ENCODE measurements at regions of chr15 and their contacts with region 1.

Region 1: GRCh38 chr15:71443538-71443937 is 328.3 kb downstream of the THSD4 start:
- DNase-seq: peak; percentile 55
- H3K4me3 ChIP-seq: no peak overlapping the region
- H3K27ac ChIP-seq: no peak overlapping the region
- H3K4me1 ChIP-seq: no peaks in the 10 kb centered on the region
- H3K27me3 ChIP-seq: no peaks in the 10 kb centered on the region
- CTCF ChIP-seq: peak; percentile 87

Region 2: DNA sequence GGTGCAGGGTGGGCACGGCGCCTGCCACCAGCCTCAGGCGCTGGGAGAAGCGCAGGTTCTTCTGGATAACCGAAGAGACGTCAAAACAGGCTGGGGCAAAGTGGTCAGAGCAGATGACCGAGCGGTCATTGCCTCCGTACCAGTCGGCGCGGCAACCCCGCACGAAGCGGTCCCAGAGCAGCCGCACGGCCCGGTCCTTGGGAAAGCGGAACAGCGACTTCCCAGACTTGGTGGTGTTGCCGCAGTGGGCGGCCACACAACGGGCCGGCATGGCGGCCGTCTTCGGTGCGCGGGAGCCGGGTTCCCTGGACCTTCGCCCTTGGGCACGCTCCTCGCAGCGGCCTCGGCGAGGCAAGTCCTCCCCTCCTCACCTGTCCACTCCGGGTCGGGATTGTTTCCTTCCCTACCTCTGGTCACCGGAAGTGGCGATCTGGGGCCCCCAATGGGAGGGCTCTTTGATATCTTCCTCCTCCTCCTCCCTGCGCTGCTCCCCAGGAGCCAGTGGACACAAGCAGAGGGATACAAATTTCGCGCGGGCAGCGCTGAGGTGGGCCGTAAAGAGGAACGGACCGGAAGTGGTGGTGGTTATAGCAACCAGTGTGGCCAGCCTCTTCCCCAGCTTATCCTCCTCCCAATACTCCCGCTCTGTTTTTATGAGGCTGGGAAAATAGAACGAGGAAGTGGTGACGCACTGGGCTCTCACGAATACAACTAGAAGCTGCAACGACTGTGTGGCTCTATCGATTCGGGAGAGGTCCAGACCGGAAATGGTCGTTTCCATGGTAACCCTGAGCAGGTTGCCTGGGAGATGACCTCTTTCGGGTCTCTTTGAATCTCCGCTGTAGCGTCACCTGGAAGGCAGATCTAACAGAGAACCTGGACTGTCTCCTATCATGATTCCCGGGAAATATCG is 551.3 kb before region 1 on chr15 and contains the starts of genes LRRC49 and THAP10:
- CTCF ChIA-PET with region 1: interaction called, 3 read pairs
- POLR2A ChIA-PET with region 1: no interaction called
- intact Hi-C with region 1: loop called (anchors 5 kb)
- DNase-seq: peak; percentile 96
- H3K4me3 ChIP-seq: peak within 1 kb of the TSS; percentile 84
- H3K27ac ChIP-seq: peak within 1 kb of the TSS; percentile 73
- H3K4me1 ChIP-seq: peaks cover 10% of the 10 kb centered on the region
- H3K27me3 ChIP-seq: no peaks in the 10 kb centered on the region
- CTCF ChIP-seq: no peak
- total RNA-seq, gene LRRC49: 9.2 and 10.9 TPM in 2 replicates
- total RNA-seq, gene THAP10: 6.2 and 6.6 TPM in 2 replicates

Region 3: DNA sequence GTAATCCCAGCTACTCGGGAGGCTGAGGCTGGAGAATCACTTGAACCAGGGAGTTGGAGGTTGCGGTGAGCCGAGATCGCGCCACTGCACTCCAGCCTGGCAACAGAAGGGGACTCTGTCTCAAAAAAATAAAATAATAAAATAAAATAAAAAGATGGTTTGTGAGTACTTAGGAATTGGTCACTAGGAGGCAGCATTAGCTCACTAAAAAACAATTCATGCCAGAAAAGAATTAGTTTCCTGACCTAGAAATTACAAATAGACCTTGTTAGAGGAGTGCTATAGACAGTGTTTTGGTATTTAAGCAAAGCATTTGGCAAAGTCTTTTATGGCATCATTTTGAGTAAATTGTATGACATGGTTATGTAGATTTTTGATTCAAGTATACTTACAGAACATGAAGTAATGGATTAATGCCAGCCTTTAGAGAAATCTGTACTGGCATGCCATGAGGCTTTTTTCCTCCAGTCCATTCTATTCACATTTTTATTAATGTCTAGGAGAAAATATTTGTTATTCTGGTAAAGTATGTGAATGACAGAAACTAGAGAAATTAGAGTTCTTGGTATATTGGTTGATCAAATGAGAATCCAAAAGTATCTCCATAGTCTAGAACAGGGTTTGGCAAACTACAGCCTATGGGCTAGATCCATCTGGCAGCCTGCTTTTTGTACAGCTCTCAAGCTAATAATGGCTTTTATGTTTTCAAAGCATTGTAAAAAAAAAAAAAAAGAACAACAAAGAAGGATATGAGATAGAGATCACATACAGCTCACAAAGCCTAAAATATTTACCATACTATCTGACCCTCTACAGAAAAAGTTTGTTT is 469.3 kb before region 1 on chr15:
- CTCF ChIA-PET with region 1: no interaction called
- POLR2A ChIA-PET with region 1: no interaction called
- intact Hi-C with region 1: loop called (anchors 5 kb)
- DNase-seq: peak; percentile 48
- H3K4me3 ChIP-seq: no peak overlapping the region
- H3K27ac ChIP-seq: no peak overlapping the region
- H3K4me1 ChIP-seq: no peaks in the 10 kb centered on the region
- H3K27me3 ChIP-seq: no peaks in the 10 kb centered on the region
- CTCF ChIP-seq: peak; percentile 48; the same call in 1 of the 2 replicates

Region 4: GRCh38 chr15:71011503-71012155 is 431.9 kb before region 1 on chr15:
- CTCF ChIA-PET with region 1: interaction called, 8 read pairs
- POLR2A ChIA-PET with region 1: no interaction called
- intact Hi-C with region 1: loop called (anchors 2 kb)
- DNase-seq: peak; percentile 45
- H3K4me3 ChIP-seq: no peak overlapping the region
- H3K27ac ChIP-seq: no peak overlapping the region
- H3K4me1 ChIP-seq: no peaks in the 10 kb centered on the region
- H3K27me3 ChIP-seq: no peaks in the 10 kb centered on the region
- CTCF ChIP-seq: peak; percentile 73

Region 5: GRCh38 chr15:71114896-71115554 is 328.5 kb before region 1 on chr15 and contains the start of gene THSD4:
- CTCF ChIA-PET with region 1: interaction called, 8 read pairs
- POLR2A ChIA-PET with region 1: no interaction called
- intact Hi-C with region 1: loop called (anchors 2 kb)
- DNase-seq: peak; percentile 75
- H3K4me3 ChIP-seq: peak within 1 kb of the TSS; percentile 52
- H3K27ac ChIP-seq: no peak within 1 kb of the TSS
- H3K4me1 ChIP-seq: peaks cover 4% of the 10 kb centered on the region
- H3K27me3 ChIP-seq: peaks cover 8% of the 10 kb centered on the region
- CTCF ChIP-seq: peak; percentile 96
- total RNA-seq, gene THSD4: 2.4 and 3.5 TPM in 2 replicates

Region 6: GRCh38 chr15:71195240-71195639 is 248.3 kb before region 1 on chr15:
- CTCF ChIA-PET with region 1: no interaction called
- POLR2A ChIA-PET with region 1: no interaction called
- intact Hi-C with region 1: loop called (anchors 5 kb)
- DNase-seq: peak; percentile 40
- H3K4me3 ChIP-seq: no peak overlapping the region
- H3K27ac ChIP-seq: no peak overlapping the region
- H3K4me1 ChIP-seq: no peaks in the 10 kb centered on the region
- H3K27me3 ChIP-seq: no peaks in the 10 kb centered on the region
- CTCF ChIP-seq: peak; percentile 54

Region 7: DNA sequence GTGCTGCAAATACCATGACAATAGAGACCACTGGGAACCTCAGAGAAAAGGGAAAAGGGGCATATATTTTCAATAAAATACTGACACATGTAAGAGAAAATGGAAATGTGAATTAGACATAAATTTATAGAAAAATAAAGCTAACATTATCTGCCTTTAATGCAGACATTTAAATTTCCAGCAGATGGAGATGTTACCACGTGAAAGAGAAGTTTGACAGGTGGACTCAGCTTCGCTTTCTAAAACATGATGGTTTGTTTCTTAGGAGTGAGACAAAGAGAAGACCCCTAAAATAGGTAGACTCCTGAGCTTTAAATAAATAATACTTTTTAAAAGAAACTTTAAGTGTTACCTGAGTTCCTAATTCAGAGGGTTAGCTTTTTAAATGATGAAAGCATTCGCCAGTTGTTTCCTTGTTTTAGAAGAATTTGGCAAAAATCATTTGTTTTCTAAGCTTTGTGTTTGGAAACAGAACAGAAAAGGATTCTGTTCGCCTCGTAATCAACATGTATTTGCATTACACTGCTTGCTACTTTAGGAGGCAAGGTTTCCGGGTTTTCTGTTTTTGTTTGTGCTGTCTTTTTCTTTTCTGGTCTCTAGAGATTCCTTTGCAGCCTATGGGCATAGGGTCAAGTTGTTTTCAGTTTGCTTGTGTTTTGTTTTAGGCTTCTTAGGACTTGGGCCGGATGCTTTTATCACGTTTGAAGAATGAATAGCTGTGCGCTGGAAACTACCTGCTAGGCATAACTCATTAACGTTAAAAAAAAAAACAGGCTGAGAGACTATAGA is 56.9 kb before region 1 on chr15:
- CTCF ChIA-PET with region 1: interaction called, 22 read pairs
- POLR2A ChIA-PET with region 1: no interaction called
- intact Hi-C with region 1: loop called (anchors 2 kb)
- DNase-seq: peak; percentile 42
- H3K4me3 ChIP-seq: no peak overlapping the region
- H3K27ac ChIP-seq: no peak overlapping the region
- H3K4me1 ChIP-seq: peaks cover 28% of the 10 kb centered on the region
- H3K27me3 ChIP-seq: no peaks in the 10 kb centered on the region
- CTCF ChIP-seq: peak; percentile 64